Astrocyte of the cerebellum (primary cell): ENCODE measurements at regions of chr10 and their contacts with region 1.

Region 1: GRCh38 chr10:49619613-49620012 is 5.8 kb downstream of the CHAT start:
- DNase-seq: no peak
- H3K4me3 ChIP-seq: no peak overlapping the region
- CTCF ChIP-seq: no peak

Region 2: GRCh38 chr10:49783645-49784044 is 164.0 kb after region 1 on chr10:
- in situ Hi-C with region 1: loop called (anchors 10 kb)
- DNase-seq: no peak
- H3K4me3 ChIP-seq: no peak overlapping the region
- CTCF ChIP-seq: no peak